ENCODE measurements at regions of chr6 and their contacts with region 1.

Region 1: DNA sequence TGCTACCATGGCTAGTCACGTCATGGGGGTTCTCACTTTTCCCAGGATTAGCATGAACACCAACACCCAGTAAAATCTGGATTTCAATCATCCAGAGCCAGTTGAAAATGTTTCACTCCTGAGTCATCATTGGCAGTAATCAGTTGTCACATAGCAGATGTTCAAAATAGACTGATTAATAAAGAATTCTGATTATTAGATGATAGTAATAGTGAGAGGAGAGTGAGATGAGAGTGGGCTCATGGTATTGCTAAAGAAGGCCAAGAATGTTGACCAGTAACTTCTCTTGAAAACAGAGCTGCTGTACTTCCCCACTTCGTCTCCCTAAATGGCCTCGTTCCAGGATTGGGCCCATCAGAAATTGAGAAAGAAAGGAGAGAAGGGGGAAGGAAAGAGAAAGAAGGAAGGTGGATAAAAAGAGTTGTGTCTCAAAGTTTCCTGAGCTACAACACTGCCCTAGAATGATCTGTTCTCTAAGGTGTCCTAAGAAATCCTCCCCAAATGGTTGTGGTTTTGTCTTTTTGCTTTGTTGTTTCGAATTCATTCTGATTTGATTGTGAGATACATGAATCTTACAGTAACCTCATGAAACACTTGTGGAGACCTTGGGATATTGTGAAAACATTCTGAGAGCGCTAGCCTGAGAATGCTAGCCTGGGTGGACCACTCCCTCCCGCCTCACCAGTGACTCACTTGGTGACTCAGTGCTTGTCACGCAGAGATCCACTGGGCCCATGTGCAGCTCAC is 502.2 kb upstream of the JARID2 start:
- DNase-seq: peak; percentile 99
- H3K4me3 ChIP-seq: no peak overlapping the region
- H3K27ac ChIP-seq: peak overlapping the region; percentile 99
- H3K4me1 ChIP-seq: peaks cover 31% of the 10 kb centered on the region
- H3K27me3 ChIP-seq: no peaks in the 10 kb centered on the region
- CTCF ChIP-seq: no peak

Region 2: GRCh38 chr6:14665827-14666724 is 77.6 kb before region 1 on chr6:
- CTCF ChIA-PET with region 1: no interaction called
- dilution Hi-C with region 1: no loop called
- in situ Hi-C with region 1: no loop called
- intact Hi-C with region 1: loop called (anchors 5 kb)
- DNase-seq: peak; percentile 94
- H3K4me3 ChIP-seq: no peak overlapping the region
- H3K27ac ChIP-seq: peak overlapping the region; percentile 24
- H3K4me1 ChIP-seq: peaks cover 29% of the 10 kb centered on the region
- H3K27me3 ChIP-seq: no peaks in the 10 kb centered on the region
- CTCF ChIP-seq: no peak

Measured in mammary epithelial cell (primary cell).